OCI-LY7 (cell line): ENCODE measurements at regions of chr2 and their contacts with region 1.

Region 1: GRCh38 chr2:136394136-136395060 is 276.4 kb upstream of the CXCR4 start:
- DNase-seq: peak; percentile 89
- H3K4me3 ChIP-seq: peak overlapping the region; percentile 11
- H3K27ac ChIP-seq: peak overlapping the region; percentile 98
- H3K4me1 ChIP-seq: peaks cover 94% of the 10 kb centered on the region
- CTCF ChIP-seq: no peak

Region 2: GRCh38 chr2:135052042-135052876 is 1342.1 kb before region 1 on chr2 and contains the start of gene RAB3GAP1:
- CTCF ChIA-PET with region 1: no interaction called
- POLR2A ChIA-PET with region 1: interaction called, 3 read pairs
- intact Hi-C with region 1: loop called (anchors 10 kb)
- DNase-seq: peak; percentile 86
- H3K4me3 ChIP-seq: peak within 1 kb of the TSS; percentile 92
- H3K27ac ChIP-seq: peak within 1 kb of the TSS; percentile 89
- H3K4me1 ChIP-seq: peaks cover 37% of the 10 kb centered on the region
- CTCF ChIP-seq: no peak; the same call in 1 of the 2 replicates
- total RNA-seq, gene RAB3GAP1: 40.2 and 49.2 TPM in 2 replicates

Region 3: GRCh38 chr2:136407952-136408318 is 13.5 kb after region 1 on chr2:
- CTCF ChIA-PET with region 1: interaction called, 11 read pairs
- POLR2A ChIA-PET with region 1: interaction called, 48 read pairs
- intact Hi-C with region 1: no loop called
- DNase-seq: no peak
- H3K4me3 ChIP-seq: peak overlapping the region; percentile 17
- H3K27ac ChIP-seq: peak overlapping the region; percentile 77
- H3K4me1 ChIP-seq: peaks cover 59% of the 10 kb centered on the region
- CTCF ChIP-seq: no peak

Region 4: DNA sequence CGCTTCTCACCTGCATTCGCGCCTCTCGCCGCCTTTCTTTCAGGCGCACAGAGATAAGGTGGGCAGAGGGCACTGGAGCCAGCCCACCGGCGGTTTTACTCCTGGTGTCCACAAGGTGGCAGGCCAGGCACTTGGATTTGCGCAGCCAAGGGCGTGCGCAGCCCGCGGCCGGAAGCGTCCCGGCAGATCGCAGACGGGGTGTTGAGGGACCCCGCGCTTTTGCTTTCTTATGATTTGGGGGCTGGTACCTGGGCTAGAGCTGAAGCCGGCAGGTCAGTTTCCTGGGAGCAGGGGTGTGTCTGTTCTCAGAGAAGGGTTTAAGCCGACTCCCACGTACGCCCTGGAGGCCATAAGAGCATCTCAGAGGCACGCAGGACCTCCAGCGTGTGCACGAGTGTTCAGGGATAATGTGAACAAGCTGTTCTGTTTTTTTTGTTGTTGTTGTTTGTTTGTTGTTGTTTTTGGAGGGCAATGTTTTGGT is 29.2 kb after region 1 on chr2:
- CTCF ChIA-PET with region 1: interaction called, 4 read pairs
- POLR2A ChIA-PET with region 1: interaction called, 5 read pairs
- intact Hi-C with region 1: loop called (anchors 1 kb)
- DNase-seq: peak; percentile 94
- H3K4me3 ChIP-seq: peak overlapping the region; percentile 65
- H3K27ac ChIP-seq: no peak overlapping the region
- H3K4me1 ChIP-seq: peaks cover 43% of the 10 kb centered on the region
- CTCF ChIP-seq: peak; percentile 94

Region 5: GRCh38 chr2:136486115-136486514 is 91.7 kb after region 1 on chr2:
- CTCF ChIA-PET with region 1: no interaction called
- POLR2A ChIA-PET with region 1: no interaction called
- intact Hi-C with region 1: no loop called
- DNase-seq: no peak
- H3K4me3 ChIP-seq: no peak overlapping the region
- H3K27ac ChIP-seq: no peak overlapping the region
- H3K4me1 ChIP-seq: no peaks in the 10 kb centered on the region
- CTCF ChIP-seq: no peak

Region 6: DNA sequence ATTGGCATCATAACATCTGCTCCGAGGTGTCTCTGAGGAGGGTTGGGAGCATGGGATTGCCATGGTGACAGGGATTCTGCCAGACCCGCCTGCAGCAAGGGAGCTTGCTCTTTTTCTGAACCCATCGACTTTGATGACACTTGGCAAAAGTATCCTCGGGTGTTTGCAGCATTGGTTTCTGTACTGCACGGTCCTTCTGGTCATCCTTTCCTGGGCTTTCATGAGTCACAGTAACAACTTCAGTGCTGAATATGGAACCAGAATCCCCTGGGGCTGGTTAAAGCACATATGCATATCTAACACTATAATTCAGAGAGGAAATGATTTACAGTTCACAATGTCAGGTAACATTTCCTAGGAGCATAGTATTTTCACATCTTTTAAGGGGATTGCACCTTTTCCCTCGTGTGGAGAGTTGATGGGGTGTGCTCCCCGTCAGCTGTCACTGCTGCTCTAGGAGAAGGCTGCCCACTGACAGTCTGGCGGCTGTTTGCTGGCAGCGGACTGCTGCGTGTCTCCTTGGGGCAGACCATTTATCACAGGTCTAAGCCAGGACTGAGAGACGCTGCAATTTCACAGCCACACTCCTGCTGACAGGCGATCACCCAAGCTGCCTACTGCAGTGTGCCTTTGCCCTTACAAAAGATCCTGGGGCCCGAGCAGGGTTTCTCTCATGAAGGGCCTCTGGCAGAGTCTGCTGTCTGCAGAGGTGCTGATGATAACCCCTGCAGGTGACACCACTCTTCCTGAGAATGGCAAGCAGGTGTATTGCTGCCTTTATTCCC is 796.2 kb after region 1 on chr2:
- CTCF ChIA-PET with region 1: no interaction called
- POLR2A ChIA-PET with region 1: no interaction called
- intact Hi-C with region 1: no loop called
- DNase-seq: no peak
- H3K4me3 ChIP-seq: no peak overlapping the region
- H3K27ac ChIP-seq: no peak overlapping the region
- H3K4me1 ChIP-seq: peaks cover 4% of the 10 kb centered on the region
- CTCF ChIP-seq: no peak

Region 7: GRCh38 chr2:137208431-137208891 is 814.1 kb after region 1 on chr2:
- CTCF ChIA-PET with region 1: no interaction called
- POLR2A ChIA-PET with region 1: no interaction called
- intact Hi-C with region 1: loop called (anchors 10 kb)
- DNase-seq: no peak
- H3K4me3 ChIP-seq: no peak overlapping the region
- H3K27ac ChIP-seq: no peak overlapping the region
- H3K4me1 ChIP-seq: peaks cover 25% of the 10 kb centered on the region
- CTCF ChIP-seq: no peak